Adrenal gland (tissue), 19 donors: ENCODE measurements at regions of chr5 and their contacts with region 1.

Region 1: DNA sequence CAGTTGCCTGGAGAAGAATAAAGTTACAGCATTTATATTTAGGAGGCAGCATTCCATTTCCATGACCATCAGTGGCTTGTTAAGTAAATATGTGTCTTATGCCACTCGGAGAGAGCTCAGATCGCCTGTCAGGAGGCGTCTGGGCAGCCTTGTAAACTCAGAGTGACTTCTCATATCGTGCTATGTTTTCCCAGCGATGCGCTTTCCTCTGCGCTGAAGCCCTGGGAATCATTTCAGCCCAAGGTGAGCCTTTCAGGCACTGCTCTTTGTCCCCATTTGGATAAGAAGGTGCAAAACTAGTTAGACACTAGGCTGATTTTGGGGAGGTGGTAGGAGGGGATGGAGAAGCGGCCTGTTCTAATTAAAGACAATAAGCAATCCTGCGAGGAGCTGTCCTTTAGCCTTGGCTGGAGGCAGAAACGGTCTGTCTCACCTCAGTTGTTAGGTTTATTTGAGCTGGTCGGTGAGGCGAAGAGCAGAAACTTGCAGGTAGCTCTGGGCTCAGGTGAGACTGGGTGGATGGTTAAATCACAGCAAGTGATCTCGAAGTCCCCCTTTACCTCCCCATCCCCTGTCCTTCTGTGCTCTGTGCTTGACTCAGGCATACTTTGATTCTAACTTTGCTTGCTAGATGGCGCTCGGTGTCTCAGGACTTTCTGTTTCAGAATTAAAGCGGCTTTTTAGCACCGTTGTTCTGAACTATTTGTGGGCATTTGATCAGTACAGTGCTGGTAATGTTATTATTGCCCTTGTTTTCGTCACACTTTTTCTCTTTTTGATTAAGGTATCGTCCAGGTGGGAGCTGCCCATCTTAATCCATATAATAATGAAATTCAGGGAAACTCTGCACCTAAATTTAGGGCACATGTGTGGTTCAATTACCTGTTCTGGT is 24.6 kb downstream of the NR2F1 start:
- DNase-seq: peak in 4 of 7 donors; percentile 43 to 70 (median 60)
- H3K4me3 ChIP-seq: peak overlapping the region in 1 of 4 donors; percentile 12
- H3K27ac ChIP-seq: peak overlapping the region in 1 of 5 donors; percentile 6
- H3K4me1 ChIP-seq: peaks cover 0 to 3% of the 10 kb centered on the region in 2 donors
- H3K27me3 ChIP-seq: peaks cover 46% of the 10 kb centered on the region
- CTCF ChIP-seq: peak; percentile 15 to 50 (median 44)
- POLR2A ChIP-seq: no peak

Region 2: GRCh38 chr5:93794954-93795353 is 187.3 kb after region 1 on chr5:
- intact Hi-C with region 1: loop called in 1 of 2 experiments (anchors 5 kb)
- DNase-seq: no peak
- H3K4me3 ChIP-seq: no peak overlapping the region
- H3K27ac ChIP-seq: no peak overlapping the region
- H3K4me1 ChIP-seq: no peaks in the 10 kb centered on the region
- H3K27me3 ChIP-seq: no peaks in the 10 kb centered on the region
- CTCF ChIP-seq: no peak
- POLR2A ChIP-seq: no peak